ENCODE measurements at regions of chr11 and their contacts with region 1.

Region 1: DNA sequence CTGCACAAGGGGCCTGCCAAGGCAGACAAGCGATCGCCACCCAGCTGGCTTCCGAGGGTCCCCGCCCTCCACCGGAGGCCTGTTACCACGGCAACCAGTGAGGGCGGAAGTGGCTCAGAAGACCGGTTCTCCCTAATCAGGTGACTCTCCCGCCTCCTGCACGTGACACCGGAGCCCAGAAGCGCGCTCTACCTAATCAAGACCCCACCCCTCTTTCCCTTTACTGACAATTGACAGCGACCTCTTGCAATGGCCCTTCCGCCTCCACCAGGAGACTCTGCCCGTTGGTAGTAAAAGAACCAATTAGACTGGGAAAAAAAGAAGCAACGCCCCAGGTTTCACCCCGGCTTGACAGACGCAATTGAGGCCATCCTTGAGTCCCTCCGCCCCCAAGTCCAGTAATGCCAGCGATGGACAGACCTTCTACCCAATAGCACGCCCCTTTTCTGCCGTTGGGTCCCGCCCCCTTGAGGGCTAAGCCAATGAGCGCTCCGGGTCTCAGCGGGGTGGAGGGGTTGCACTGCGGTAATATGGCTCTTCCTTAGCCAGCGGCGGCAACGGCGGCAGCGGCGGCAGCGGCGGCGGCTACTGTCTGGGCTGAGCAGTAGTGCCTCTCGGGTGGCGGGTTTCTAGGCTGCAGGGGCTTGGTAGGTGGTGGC is at the start of gene UVRAG:
- DNase-seq: peak; percentile 96 to 99 (median 98)
- ATAC-seq: peak; percentile 94
- H3K4me3 ChIP-seq: peak within 1 kb of the TSS; percentile 96
- H3K4me3 Mint-ChIP-seq: peak within 1 kb of the TSS in 3 of 10 donors; percentile 93 to 99 (median 98)
- H3K27ac ChIP-seq: peak within 1 kb of the TSS; percentile 83
- H3K27ac Mint-ChIP-seq: peak within 1 kb of the TSS in 7 of 9 donors; percentile 88 to 100 (median 96)
- H3K4me1 ChIP-seq: peaks cover 14 to 26% of the 10 kb centered on the region in 2 donors
- H3K4me1 Mint-ChIP-seq: peaks cover 5 to 21% (median 20%) of the 10 kb centered on the region in 7 donors
- H3K27me3 ChIP-seq: no peaks in the 10 kb centered on the region
- H3K27me3 Mint-ChIP-seq: peaks cover 0 to 4% (median 0%) of the 10 kb centered on the region in 5 donors
- total RNA-seq, gene UVRAG: 24.0 to 46.1 (median 25.4) TPM

Region 2: GRCh38 chr11:74748211-74749127 is 1066.3 kb before region 1 on chr11 and contains the start of gene RNF169:
- CTCF ChIA-PET with region 1: no interaction called
- POLR2A ChIA-PET with region 1: no interaction called
- intact Hi-C with region 1: loop called in 1 of 2 experiments (anchors 10 kb)
- DNase-seq: peak; percentile 59 to 88 (median 84)
- ATAC-seq: peak; percentile 100
- H3K4me3 ChIP-seq: peak within 1 kb of the TSS; percentile 73
- H3K4me3 Mint-ChIP-seq: peak within 1 kb of the TSS; percentile 81 to 99 (median 94)
- H3K27ac ChIP-seq: peak within 1 kb of the TSS; percentile 79
- H3K27ac Mint-ChIP-seq: peak within 1 kb of the TSS; percentile 84 to 97 (median 91)
- H3K4me1 ChIP-seq: peaks cover 16 to 29% of the 10 kb centered on the region in 2 donors
- H3K4me1 Mint-ChIP-seq: peaks cover 25 to 48% (median 42%) of the 10 kb centered on the region in 7 donors
- H3K27me3 ChIP-seq: no peaks in the 10 kb centered on the region
- H3K27me3 Mint-ChIP-seq: no peaks in the 10 kb centered on the region
- total RNA-seq, gene RNF169: 17.9 to 25.5 (median 22.2) TPM

Region 3: DNA sequence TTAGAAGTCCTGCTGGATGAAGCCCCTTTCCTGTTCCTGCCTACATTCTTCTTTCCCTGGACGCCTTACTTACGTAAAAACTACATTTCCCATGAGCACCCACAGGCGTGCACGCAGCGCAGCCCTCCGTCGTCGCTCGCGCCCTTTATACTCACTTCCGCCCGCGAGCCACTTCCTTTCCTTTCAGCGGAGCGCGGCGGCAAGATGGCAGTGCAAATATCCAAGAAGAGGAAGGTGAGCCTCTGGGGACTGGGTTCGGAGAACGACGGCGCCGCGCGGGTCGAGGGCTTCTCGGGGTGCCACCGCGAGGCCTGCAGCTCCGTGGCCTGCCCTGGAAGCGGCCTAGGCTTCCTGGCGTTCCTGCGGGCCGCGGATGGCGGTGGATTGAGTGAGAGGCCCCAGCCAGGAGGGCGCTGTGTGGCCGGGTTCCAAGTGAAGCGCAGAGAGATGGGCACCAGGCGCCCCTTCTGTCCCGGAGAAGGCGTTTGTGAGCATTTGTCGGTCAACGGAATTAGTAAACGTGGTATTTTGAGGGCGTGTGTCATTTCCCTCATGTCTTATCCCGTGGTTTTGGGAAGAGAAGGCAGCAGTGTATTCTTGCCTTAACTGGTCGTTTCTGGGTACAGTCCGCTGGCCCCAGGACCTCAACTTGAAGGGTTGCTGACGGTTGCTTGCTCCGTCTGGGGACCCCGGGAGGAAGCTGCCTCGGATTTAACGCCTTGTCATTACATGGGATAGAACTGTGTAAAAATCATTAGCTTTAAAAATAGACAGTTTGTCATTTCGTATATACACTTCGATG is 415.3 kb before region 1 on chr11 and contains the start of gene RPS3:
- CTCF ChIA-PET with region 1: no interaction called
- POLR2A ChIA-PET with region 1: no interaction called
- intact Hi-C with region 1: loop called (anchors 2 to 10 kb)
- DNase-seq: peak; percentile 81 to 91 (median 88)
- ATAC-seq: peak; percentile 96
- H3K4me3 ChIP-seq: peak within 1 kb of the TSS; percentile 80
- H3K4me3 Mint-ChIP-seq: peak within 1 kb of the TSS; percentile 87 to 99 (median 94)
- H3K27ac ChIP-seq: peak within 1 kb of the TSS; percentile 86
- H3K27ac Mint-ChIP-seq: peak within 1 kb of the TSS; percentile 94 to 99 (median 96)
- H3K4me1 ChIP-seq: peaks cover 16 to 17% of the 10 kb centered on the region in 2 donors
- H3K4me1 Mint-ChIP-seq: peaks cover 20 to 54% (median 48%) of the 10 kb centered on the region in 7 donors
- H3K27me3 ChIP-seq: no peaks in the 10 kb centered on the region
- H3K27me3 Mint-ChIP-seq: peaks cover 0 to 11% (median 0%) of the 10 kb centered on the region in 5 donors
- total RNA-seq, gene RPS3: 3,135 to 5,501 (median 5,089) TPM

Region 4: DNA sequence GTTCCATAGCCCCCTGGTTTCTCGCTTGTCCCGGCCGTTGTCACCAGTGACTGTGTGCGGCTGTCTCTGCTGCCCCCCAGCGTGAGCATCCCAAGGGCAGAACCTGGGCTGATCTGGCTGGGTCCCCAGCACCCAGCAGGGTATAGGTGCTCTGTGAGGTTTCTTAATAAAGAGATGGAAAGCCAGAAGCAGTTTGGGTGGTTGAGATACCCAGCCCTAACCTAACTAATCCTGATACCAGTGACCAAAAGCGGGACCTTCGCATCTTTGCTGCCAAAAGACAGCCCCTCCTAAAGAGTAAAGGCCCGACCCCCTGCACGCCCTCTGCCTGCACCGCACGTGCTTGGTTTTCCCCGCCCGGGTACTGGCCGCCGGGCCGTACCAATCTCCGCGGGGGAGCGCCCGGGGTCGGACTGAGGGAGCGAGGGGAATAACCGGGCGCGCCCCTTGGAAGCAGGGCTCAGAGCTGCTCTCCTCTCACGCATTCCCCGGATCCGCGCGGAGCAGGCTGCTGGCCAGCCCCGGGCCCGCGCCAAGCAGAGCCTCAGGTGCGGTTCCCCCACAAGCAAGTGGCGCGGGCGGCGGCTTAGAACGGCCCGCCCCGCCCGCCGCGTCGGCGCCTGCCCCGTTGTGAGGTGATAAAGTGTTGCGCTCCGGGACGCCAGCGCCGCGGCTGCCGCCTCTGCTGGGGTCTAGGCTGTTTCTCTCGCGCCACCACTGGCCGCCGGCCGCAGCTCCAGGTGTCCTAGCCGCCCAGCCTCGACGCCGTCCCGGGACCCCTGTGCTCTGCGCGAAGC is 46.5 kb before region 1 on chr11 and contains the start of gene DGAT2:
- CTCF ChIA-PET with region 1: no interaction called
- POLR2A ChIA-PET with region 1: no interaction called
- intact Hi-C with region 1: loop called (anchors 1 kb)
- DNase-seq: peak; percentile 23 to 72 (median 59)
- ATAC-seq: peak; percentile 83
- H3K4me3 ChIP-seq: peak within 1 kb of the TSS; percentile 55
- H3K4me3 Mint-ChIP-seq: peak within 1 kb of the TSS; percentile 74 to 84 (median 81)
- H3K27ac ChIP-seq: no peak within 1 kb of the TSS
- H3K27ac Mint-ChIP-seq: peak within 1 kb of the TSS in 5 of 9 donors; percentile 8 to 83 (median 58)
- H3K4me1 ChIP-seq: peaks cover 5 to 7% of the 10 kb centered on the region in 2 donors
- H3K4me1 Mint-ChIP-seq: peaks cover 13 to 22% (median 16%) of the 10 kb centered on the region in 7 donors
- H3K27me3 ChIP-seq: peaks cover 0 to 4% of the 10 kb centered on the region in 2 donors
- H3K27me3 Mint-ChIP-seq: peaks cover 7 to 24% (median 14%) of the 10 kb centered on the region in 5 donors
- total RNA-seq, gene DGAT2: 0.32 to 8.5 (median 1.4) TPM

Region 5: DNA sequence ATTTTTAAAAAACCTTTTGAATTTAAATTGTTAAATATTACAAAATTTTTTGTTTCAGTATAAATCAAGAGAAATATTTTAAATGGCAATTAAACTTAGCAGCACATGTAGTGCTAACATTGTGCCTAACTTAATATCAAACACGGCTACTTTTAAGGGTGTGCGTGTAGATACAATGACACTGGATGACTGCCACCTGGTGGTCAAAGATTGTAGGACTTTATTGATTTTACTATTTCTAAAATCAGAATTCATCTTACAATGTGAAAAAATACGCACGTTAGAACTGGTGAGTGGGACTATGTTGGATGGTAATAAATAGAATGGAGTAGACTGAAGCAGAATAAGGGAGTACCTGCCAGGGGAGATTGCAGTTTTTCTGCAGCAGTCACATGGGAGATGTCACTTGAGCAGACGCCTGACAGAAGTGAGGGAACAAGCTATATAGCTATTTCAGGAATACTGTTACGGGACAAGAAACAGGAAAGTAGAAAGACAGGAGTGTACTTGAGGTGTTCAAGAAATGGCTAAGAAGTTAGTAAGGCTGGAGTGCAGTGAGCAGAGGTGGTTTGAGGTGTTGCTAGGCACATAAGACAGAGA is 53.1 kb after region 1 on chr11:
- CTCF ChIA-PET with region 1: interaction called, 3 read pairs
- POLR2A ChIA-PET with region 1: no interaction called
- intact Hi-C with region 1: loop called (anchors 5 kb)
- DNase-seq: peak in 7 of 9 donors; percentile 32 to 62 (median 50)
- ATAC-seq: peak; percentile 80
- H3K4me3 ChIP-seq: no peak overlapping the region
- H3K4me3 Mint-ChIP-seq: no peak overlapping the region
- H3K27ac ChIP-seq: no peak overlapping the region
- H3K27ac Mint-ChIP-seq: no peak overlapping the region
- H3K4me1 ChIP-seq: peaks cover 0 to 2% of the 10 kb centered on the region in 2 donors
- H3K4me1 Mint-ChIP-seq: peaks cover 4 to 15% (median 8%) of the 10 kb centered on the region in 7 donors
- H3K27me3 ChIP-seq: no peaks in the 10 kb centered on the region
- H3K27me3 Mint-ChIP-seq: no peaks in the 10 kb centered on the region

Region 6: GRCh38 chr11:76444384-76445123 is 629.7 kb after region 1 on chr11 and contains the start of gene EMSY:
- CTCF ChIA-PET with region 1: no interaction called
- POLR2A ChIA-PET with region 1: no interaction called
- intact Hi-C with region 1: loop called (anchors 1 kb)
- DNase-seq: peak; percentile 73 to 95 (median 92)
- ATAC-seq: peak; percentile 96
- H3K4me3 ChIP-seq: peak within 1 kb of the TSS; percentile 95
- H3K4me3 Mint-ChIP-seq: peak within 1 kb of the TSS; percentile 91 to 99 (median 96)
- H3K27ac ChIP-seq: peak within 1 kb of the TSS; percentile 92
- H3K27ac Mint-ChIP-seq: peak within 1 kb of the TSS; percentile 91 to 98 (median 97)
- H3K4me1 ChIP-seq: peaks cover 12 to 19% of the 10 kb centered on the region in 2 donors
- H3K4me1 Mint-ChIP-seq: peaks cover 29 to 58% (median 44%) of the 10 kb centered on the region in 7 donors
- H3K27me3 ChIP-seq: no peaks in the 10 kb centered on the region
- H3K27me3 Mint-ChIP-seq: no peaks in the 10 kb centered on the region
- total RNA-seq, gene EMSY: 35.5 to 49.0 (median 40.0) TPM

Region 7: GRCh38 chr11:76823481-76824078 is 1008.8 kb after region 1 on chr11:
- CTCF ChIA-PET with region 1: no interaction called
- POLR2A ChIA-PET with region 1: no interaction called
- intact Hi-C with region 1: no loop called
- DNase-seq: no peak
- ATAC-seq: peak; percentile 36
- H3K4me3 ChIP-seq: no peak overlapping the region
- H3K4me3 Mint-ChIP-seq: no peak overlapping the region
- H3K27ac ChIP-seq: no peak overlapping the region
- H3K27ac Mint-ChIP-seq: no peak overlapping the region
- H3K4me1 ChIP-seq: no peaks in the 10 kb centered on the region
- H3K4me1 Mint-ChIP-seq: peaks cover 0 to 27% (median 10%) of the 10 kb centered on the region in 7 donors
- H3K27me3 ChIP-seq: no peaks in the 10 kb centered on the region
- H3K27me3 Mint-ChIP-seq: peaks cover 0 to 17% (median 0%) of the 10 kb centered on the region in 5 donors

Measured in naive thymus-derived CD4-positive, alpha-beta T cell (primary cell).